Sigmoid colon (tissue), 7 donors: ENCODE measurements at regions of chr18 and their contacts with region 1.

Region 1: GRCh38 chr18:59697236-59697932 is at the start of gene CCBE1:
- DNase-seq: peak; percentile 85
- H3K4me3 ChIP-seq: peak within 1 kb of the TSS; percentile 71 to 95 (median 84)
- H3K27ac ChIP-seq: peak within 1 kb of the TSS in 3 of 4 donors; percentile 85 to 89 (median 86)
- H3K4me1 ChIP-seq: peaks cover 3 to 58% (median 44%) of the 10 kb centered on the region in 4 donors
- H3K27me3 ChIP-seq: peaks cover 0 to 17% (median 0%) of the 10 kb centered on the region in 3 donors
- CTCF ChIP-seq: peak; percentile 86 to 99 (median 91)
- EP300 ChIP-seq: no peak
- POLR2A ChIP-seq: peak in 1 of 2 donors; percentile 21
- total RNA-seq, gene CCBE1: 38.9 to 61.1 (median 48.9) TPM

Region 2: DNA sequence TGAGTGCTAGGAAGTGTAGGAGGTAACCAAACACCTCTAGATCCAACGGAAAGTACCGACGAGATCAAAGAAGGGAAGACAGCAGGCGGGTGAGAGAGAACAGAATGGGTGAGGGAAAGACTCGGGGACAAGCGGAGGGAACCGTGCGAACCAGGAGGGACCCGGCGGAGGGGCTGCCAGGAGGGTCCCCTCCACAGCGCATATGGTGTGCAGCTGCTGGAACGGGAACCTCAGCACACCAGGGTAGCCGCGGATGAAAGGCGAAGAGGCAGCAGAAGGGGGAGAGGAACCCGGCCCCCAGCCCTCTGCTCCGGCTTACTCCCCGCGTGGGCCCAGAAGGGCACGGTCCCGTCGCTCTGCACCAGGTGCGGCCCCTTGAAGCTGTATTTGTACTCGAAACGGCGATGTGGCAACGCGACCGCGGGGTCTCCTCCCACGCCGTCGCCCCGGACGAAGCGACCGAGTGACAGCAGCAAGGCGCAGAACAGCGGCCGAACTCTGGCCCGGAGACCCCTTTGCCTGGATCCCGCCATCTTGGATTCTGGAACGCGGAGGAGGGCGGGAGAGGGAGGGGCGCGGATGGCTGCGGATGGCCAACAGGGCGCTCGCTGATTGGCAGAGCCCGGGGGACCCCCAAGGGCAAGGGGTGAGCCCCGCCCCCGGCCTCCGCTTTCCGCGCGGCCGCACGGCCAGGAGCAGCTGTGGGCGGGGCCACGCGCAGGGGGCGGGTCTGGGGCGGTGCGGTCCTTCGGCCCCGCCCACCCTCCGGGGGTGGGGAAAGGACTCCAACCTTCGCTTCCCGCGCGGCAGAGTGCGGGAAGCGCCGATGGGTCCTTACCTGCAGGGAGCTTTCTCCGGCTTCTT is 338.4 kb before region 1 on chr18 and contains the start of gene LMAN1:
- intact Hi-C with region 1: loop called (anchors 10 kb)
- DNase-seq: peak; percentile 98
- H3K4me3 ChIP-seq: peak within 1 kb of the TSS; percentile 64 to 97 (median 82)
- H3K27ac ChIP-seq: peak within 1 kb of the TSS; percentile 83 to 90 (median 87)
- H3K4me1 ChIP-seq: peaks cover 0 to 30% (median 23%) of the 10 kb centered on the region in 4 donors
- H3K27me3 ChIP-seq: no peaks in the 10 kb centered on the region
- CTCF ChIP-seq: no peak
- EP300 ChIP-seq: peak in 1 of 4 donors; percentile 22
- POLR2A ChIP-seq: no peak
- total RNA-seq, gene LMAN1: 47.1 to 65.2 (median 56.9) TPM

Region 3: GRCh38 chr18:59459369-59460079 is 237.9 kb before region 1 on chr18:
- intact Hi-C with region 1: loop called (anchors 5 kb)
- DNase-seq: no peak
- H3K4me3 ChIP-seq: no peak overlapping the region
- H3K27ac ChIP-seq: peak overlapping the region in 1 of 4 donors; percentile 11
- H3K4me1 ChIP-seq: peaks cover 0 to 30% (median 22%) of the 10 kb centered on the region in 4 donors
- H3K27me3 ChIP-seq: no peaks in the 10 kb centered on the region
- CTCF ChIP-seq: peak; percentile 28 to 59 (median 44)
- EP300 ChIP-seq: no peak
- POLR2A ChIP-seq: no peak

Region 4: GRCh38 chr18:59516356-59517155 is 180.8 kb before region 1 on chr18:
- intact Hi-C with region 1: loop called (anchors 5 kb)
- DNase-seq: peak; percentile 79
- H3K4me3 ChIP-seq: no peak overlapping the region
- H3K27ac ChIP-seq: peak overlapping the region in 3 of 4 donors; percentile 76 to 82 (median 82)
- H3K4me1 ChIP-seq: peaks cover 0 to 65% (median 54%) of the 10 kb centered on the region in 4 donors
- H3K27me3 ChIP-seq: no peaks in the 10 kb centered on the region
- CTCF ChIP-seq: no peak
- EP300 ChIP-seq: peak in 3 of 4 donors; percentile 6 to 72 (median 56)
- POLR2A ChIP-seq: no peak

Region 5: GRCh38 chr18:59576541-59577385 is 120.6 kb before region 1 on chr18:
- intact Hi-C with region 1: no loop called
- DNase-seq: no peak
- H3K4me3 ChIP-seq: no peak overlapping the region
- H3K27ac ChIP-seq: no peak overlapping the region
- H3K4me1 ChIP-seq: peaks cover 0 to 19% (median 3%) of the 10 kb centered on the region in 4 donors
- H3K27me3 ChIP-seq: no peaks in the 10 kb centered on the region
- CTCF ChIP-seq: no peak
- EP300 ChIP-seq: no peak
- POLR2A ChIP-seq: no peak

Region 6: DNA sequence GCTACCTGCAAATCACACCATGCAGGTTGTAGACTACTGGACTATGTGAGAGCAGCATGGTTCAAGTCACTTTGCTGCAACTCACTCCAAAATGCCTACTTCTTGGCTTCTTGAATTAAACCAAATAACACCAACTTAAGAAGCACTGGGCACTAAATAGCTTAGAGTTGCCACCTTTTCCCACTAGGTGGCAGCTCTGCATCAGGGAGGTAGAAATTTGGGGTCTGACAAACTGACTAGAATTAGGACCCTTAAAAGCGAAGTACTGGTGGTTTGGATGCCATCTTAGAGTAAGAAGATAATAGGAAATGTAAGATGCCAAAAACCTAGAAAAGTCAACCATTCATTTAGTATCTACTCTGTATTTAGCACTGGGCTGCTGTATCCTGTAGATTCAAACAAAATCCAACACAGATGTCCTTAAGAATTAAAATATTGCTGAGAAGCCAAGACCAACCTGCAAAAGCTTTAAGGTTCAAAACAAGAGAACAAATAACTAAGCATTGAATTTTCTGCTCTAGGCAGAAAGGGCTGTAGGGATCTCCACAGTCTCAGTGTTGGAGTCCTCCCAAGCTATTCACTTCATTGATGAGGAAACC is 65.7 kb before region 1 on chr18:
- intact Hi-C with region 1: loop called (anchors 2 kb)
- DNase-seq: no peak
- H3K4me3 ChIP-seq: no peak overlapping the region
- H3K27ac ChIP-seq: peak overlapping the region in 3 of 4 donors; percentile 68 to 81 (median 79)
- H3K4me1 ChIP-seq: peaks cover 0 to 84% (median 56%) of the 10 kb centered on the region in 4 donors
- H3K27me3 ChIP-seq: no peaks in the 10 kb centered on the region
- CTCF ChIP-seq: peak; percentile 12 to 59 (median 52)
- EP300 ChIP-seq: no peak
- POLR2A ChIP-seq: no peak

Region 7: GRCh38 chr18:59650266-59650820 is 47.0 kb before region 1 on chr18:
- intact Hi-C with region 1: loop called (anchors 5 kb)
- DNase-seq: no peak
- H3K4me3 ChIP-seq: no peak overlapping the region
- H3K27ac ChIP-seq: peak overlapping the region in 3 of 4 donors; percentile 75 to 84 (median 80)
- H3K4me1 ChIP-seq: peaks cover 0 to 90% (median 81%) of the 10 kb centered on the region in 4 donors
- H3K27me3 ChIP-seq: no peaks in the 10 kb centered on the region
- CTCF ChIP-seq: no peak
- EP300 ChIP-seq: no peak
- POLR2A ChIP-seq: no peak

Region 8: GRCh38 chr18:59778434-59778833 is 81.0 kb after region 1 on chr18:
- intact Hi-C with region 1: no loop called
- DNase-seq: no peak
- H3K4me3 ChIP-seq: no peak overlapping the region
- H3K27ac ChIP-seq: no peak overlapping the region
- H3K4me1 ChIP-seq: no peaks in the 10 kb centered on the region
- H3K27me3 ChIP-seq: no peaks in the 10 kb centered on the region
- CTCF ChIP-seq: no peak
- EP300 ChIP-seq: no peak
- POLR2A ChIP-seq: no peak

Region 9: GRCh38 chr18:59810183-59810582 is 112.8 kb after region 1 on chr18:
- intact Hi-C with region 1: no loop called
- DNase-seq: no peak
- H3K4me3 ChIP-seq: no peak overlapping the region
- H3K27ac ChIP-seq: no peak overlapping the region
- H3K4me1 ChIP-seq: no peaks in the 10 kb centered on the region
- H3K27me3 ChIP-seq: no peaks in the 10 kb centered on the region
- CTCF ChIP-seq: no peak
- EP300 ChIP-seq: no peak
- POLR2A ChIP-seq: no peak

Region 10: GRCh38 chr18:59823596-59824195 is 126.3 kb after region 1 on chr18:
- intact Hi-C with region 1: loop called (anchors 5 kb)
- DNase-seq: peak; percentile 87
- H3K4me3 ChIP-seq: no peak overlapping the region
- H3K27ac ChIP-seq: no peak overlapping the region
- H3K4me1 ChIP-seq: peaks cover 0 to 7% (median 0%) of the 10 kb centered on the region in 4 donors
- H3K27me3 ChIP-seq: no peaks in the 10 kb centered on the region
- CTCF ChIP-seq: peak; percentile 81 to 91 (median 86)
- EP300 ChIP-seq: no peak
- POLR2A ChIP-seq: no peak

Region 11: DNA sequence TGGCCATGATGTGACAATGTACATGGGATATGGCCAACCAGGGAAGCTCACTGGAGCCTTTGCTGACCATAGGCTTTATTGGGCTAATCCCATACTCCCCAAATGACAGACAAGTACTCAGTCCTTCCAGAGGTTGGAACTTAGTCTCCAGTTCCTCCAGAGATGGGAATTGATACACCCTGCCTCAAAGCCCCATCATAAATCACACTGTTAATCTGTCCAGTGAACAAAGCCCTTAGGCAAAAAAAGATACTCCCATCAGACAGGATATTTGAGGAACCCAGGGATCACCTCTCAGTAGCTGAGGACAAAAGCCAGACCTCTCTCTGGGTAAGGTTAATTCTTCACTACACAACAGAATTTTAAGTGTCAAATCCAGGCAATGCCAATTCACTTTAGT is 1388.4 kb after region 1 on chr18:
- intact Hi-C with region 1: no loop called
- DNase-seq: no peak
- H3K4me3 ChIP-seq: no peak overlapping the region
- H3K27ac ChIP-seq: no peak overlapping the region
- H3K4me1 ChIP-seq: no peaks in the 10 kb centered on the region
- H3K27me3 ChIP-seq: no peaks in the 10 kb centered on the region
- CTCF ChIP-seq: no peak
- EP300 ChIP-seq: no peak
- POLR2A ChIP-seq: no peak